A673 (cell line): ENCODE measurements at regions of chr9 and their contacts with region 1.

Region 1: DNA sequence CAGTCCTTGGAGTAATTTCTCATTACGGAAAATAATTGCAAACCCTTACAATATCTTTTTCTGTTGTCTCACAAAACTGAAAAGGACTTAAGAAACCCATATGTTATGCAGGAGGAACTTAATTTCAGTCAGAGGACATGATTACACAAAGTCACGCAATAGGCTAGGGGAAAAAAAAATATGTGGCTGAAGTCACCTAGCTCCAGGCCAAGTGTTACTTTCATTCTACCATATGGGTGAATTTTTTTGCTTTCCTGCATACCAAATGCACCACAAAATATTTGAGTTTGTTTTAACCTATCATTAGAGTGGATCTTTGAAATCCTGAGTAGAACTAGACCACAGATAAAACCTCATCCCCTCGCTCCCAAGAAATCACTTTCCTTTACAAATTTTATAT is 523.5 kb downstream of the CAAP1 start:
- DNase-seq: no peak
- H3K4me3 ChIP-seq: no peak overlapping the region
- H3K27ac ChIP-seq: no peak overlapping the region
- H3K4me1 ChIP-seq: no peaks in the 10 kb centered on the region
- H3K27me3 ChIP-seq: no peaks in the 10 kb centered on the region
- CTCF ChIP-seq: no peak

Region 2: DNA sequence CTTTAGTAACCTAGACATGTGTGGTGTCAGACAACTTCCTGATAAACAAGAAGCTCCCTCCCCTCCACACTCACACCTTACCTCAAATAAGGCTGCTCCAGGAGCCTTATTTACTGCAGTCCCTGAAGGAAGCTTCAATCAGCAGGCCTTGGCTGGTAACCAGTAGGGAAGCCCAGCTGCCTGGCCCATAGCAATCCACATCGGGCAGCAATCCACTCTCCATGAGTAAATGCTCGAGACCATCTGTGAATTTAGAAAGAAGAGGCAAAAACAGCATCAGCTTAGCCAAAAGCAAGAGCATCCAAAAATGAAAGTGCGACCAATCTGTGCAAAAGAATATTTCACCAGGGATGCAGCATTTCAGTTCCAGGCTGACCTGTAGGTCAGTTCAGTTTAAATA is 477.6 kb before region 1 on chr9:
- CTCF ChIA-PET with region 1: no interaction called
- POLR2A ChIA-PET with region 1: no interaction called
- intact Hi-C with region 1: no loop called
- DNase-seq: no peak
- H3K4me3 ChIP-seq: no peak overlapping the region
- H3K27ac ChIP-seq: no peak overlapping the region
- H3K4me1 ChIP-seq: no peaks in the 10 kb centered on the region
- H3K27me3 ChIP-seq: no peaks in the 10 kb centered on the region
- CTCF ChIP-seq: no peak

Region 3: GRCh38 chr9:26426551-26427131 is 57.5 kb after region 1 on chr9:
- CTCF ChIA-PET with region 1: no interaction called
- POLR2A ChIA-PET with region 1: no interaction called
- intact Hi-C with region 1: loop called (anchors 10 kb)
- DNase-seq: no peak
- H3K4me3 ChIP-seq: no peak overlapping the region
- H3K27ac ChIP-seq: no peak overlapping the region
- H3K4me1 ChIP-seq: no peaks in the 10 kb centered on the region
- H3K27me3 ChIP-seq: no peaks in the 10 kb centered on the region
- CTCF ChIP-seq: no peak

Region 4: GRCh38 chr9:26471261-26471660 is 102.2 kb after region 1 on chr9:
- CTCF ChIA-PET with region 1: no interaction called
- POLR2A ChIA-PET with region 1: no interaction called
- intact Hi-C with region 1: no loop called
- DNase-seq: no peak
- H3K4me3 ChIP-seq: no peak overlapping the region
- H3K27ac ChIP-seq: no peak overlapping the region
- H3K4me1 ChIP-seq: no peaks in the 10 kb centered on the region
- H3K27me3 ChIP-seq: no peaks in the 10 kb centered on the region
- CTCF ChIP-seq: no peak